ENCODE measurements at regions of chr14 and their contacts with region 1.

Region 1: DNA sequence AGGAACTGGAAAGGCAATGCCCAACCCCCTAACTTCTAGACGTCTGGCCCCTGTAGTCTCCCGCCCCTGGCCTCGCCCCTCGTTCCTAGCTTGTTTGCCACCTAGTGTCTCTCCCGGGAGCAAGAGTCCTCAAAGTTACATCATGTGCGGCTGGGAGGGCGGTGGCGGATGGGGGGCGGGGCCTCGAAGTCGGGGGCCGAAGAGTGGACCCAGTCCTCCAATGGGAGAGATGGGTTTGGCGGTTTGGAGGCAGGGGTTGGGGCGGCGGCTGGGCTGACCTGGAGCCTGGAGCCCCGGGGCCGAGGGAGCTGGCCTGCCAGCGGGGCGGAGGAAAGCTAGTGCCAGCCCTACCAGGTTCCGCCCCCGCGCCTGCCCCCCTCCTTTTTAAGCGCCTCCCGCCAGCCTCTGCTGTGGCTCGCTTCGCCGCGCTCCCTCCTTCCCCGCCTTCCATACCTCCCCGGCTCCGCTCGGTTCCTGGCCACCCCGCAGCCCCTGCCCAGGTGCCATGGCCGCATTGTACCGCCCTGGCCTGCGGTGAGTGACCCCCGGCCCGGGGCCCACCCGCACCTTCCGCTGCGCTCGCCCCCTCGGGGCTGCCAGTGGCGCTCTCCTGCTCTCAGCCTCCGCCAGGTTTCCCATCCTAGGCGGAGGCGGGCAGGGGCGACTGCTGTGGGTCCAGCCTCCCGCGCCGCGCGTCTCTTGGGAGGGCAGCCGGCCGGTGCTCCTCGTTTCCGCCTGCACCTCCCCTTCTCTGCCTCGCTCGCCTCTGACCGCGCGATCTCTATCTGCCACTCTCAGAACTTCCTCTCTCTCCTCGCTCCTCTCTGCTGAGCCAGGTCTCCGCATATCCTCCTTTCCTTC is at the start of gene PCK2:
- DNase-seq: peak; percentile 73
- H3K4me3 ChIP-seq: peak within 1 kb of the TSS; percentile 83
- H3K27ac ChIP-seq: peak within 1 kb of the TSS; percentile 68
- H3K27me3 ChIP-seq: no peaks in the 10 kb centered on the region
- CTCF ChIP-seq: no peak
- polyA plus RNA-seq, gene PCK2: 47.0 and 59.9 TPM in 2 replicates

Region 2: DNA sequence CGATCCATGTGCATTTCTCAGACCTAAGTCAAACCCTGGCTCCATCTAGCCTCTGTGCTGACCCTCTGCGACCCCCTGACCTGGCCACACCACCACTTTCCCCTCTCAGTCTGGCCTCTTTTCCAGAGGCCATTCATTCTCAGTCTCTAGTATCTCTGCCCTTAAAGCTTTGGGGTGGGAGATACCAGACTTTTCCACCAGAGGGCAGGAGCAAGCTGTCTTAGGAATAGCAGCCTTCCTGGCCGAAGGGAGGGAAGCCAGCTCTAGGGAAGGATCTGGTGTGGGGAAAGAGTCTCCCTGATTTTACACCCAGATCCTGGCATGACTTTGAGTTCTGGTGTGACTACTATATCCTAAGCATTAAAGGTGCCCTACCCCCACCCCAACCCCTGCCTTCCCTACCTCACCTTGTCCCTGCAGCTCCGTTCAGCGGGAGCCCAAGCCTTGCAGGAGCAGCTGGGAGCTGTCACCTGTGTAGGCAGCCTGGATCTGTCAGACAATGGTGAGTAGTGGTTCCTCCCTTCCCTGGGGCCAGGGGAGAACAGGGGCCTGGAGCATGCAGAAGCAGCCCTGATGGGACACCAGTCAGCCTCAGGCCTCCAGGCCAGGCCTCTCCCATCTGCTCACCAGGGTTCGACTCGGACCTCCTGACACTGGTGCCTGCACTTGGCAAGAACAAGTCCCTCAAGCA is 35.7 kb before region 1 on chr14:
- CTCF ChIA-PET with region 1: interaction called, 196 read pairs
- POLR2A ChIA-PET with region 1: interaction called, 4 read pairs
- DNase-seq: peak; percentile 59
- H3K4me3 ChIP-seq: no peak overlapping the region
- H3K27ac ChIP-seq: no peak overlapping the region
- H3K27me3 ChIP-seq: peaks cover 36% of the 10 kb centered on the region
- CTCF ChIP-seq: peak; percentile 93

Region 3: GRCh38 chr14:24075485-24076301 is 18.4 kb before region 1 on chr14:
- CTCF ChIA-PET with region 1: interaction called, 29 read pairs
- POLR2A ChIA-PET with region 1: interaction called, 7 read pairs
- DNase-seq: no peak
- H3K4me3 ChIP-seq: no peak overlapping the region
- H3K27ac ChIP-seq: no peak overlapping the region
- H3K27me3 ChIP-seq: peaks cover 57% of the 10 kb centered on the region
- CTCF ChIP-seq: no peak

Region 4: GRCh38 chr14:24108336-24108874 is 14.3 kb after region 1 on chr14:
- CTCF ChIA-PET with region 1: interaction called, 212 read pairs
- POLR2A ChIA-PET with region 1: interaction called, 36 read pairs
- DNase-seq: no peak
- H3K4me3 ChIP-seq: no peak overlapping the region
- H3K27ac ChIP-seq: no peak overlapping the region
- H3K27me3 ChIP-seq: no peaks in the 10 kb centered on the region
- CTCF ChIP-seq: no peak

Measured in AG04450 (cell line).